GM12878 (cell line): ENCODE measurements at regions of chr11 and their contacts with region 1.

Region 1: GRCh38 chr11:64703048-64703447 is 19.9 kb downstream of the NRXN2 start:
- DNase-seq: no peak
- ATAC-seq: no peak
- H3K4me3 ChIP-seq: no peak overlapping the region
- H3K27ac ChIP-seq: no peak overlapping the region
- H3K4me1 ChIP-seq: no peaks in the 10 kb centered on the region
- H3K27me3 ChIP-seq: peaks cover 0 to 2% of the 10 kb centered on the region in 2 experiments; a peak in 2 of 4 replicates
- CTCF ChIP-seq: no peak
- EP300 ChIP-seq: no peak
- POLR2A ChIP-seq: no peak
- RAD21 ChIP-seq: no peak

Region 2: DNA sequence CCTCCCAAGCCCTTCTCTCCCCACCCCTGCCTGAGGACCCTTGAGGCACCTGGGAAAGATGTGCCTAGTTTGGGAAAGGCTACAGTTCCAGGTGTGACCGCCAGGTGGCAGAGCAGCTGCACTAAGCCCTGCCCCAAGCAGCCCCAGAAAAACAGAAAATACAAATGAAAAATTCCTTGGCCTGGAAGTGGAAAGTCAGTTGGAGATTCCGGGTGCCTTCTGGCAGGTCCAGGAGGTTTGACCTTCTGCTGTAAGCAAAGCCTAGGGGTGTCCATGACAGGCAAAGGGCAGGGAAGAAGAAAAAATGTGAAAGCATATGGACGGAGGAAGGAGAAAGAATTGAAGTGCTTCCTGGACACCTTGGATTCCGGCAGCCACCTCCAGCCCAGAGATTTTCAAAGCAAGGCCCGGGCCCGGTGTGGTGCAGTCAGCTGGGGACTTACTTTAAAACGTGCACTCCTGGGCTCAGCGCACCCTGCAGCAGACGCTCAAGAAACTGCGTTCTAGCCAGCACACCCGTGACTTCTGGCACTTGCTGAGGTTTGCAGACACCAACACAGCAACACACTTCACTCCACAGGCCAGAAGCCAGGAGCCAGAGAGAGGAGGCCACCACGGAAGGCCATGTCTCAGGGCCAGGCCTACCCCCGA is 149.4 kb before region 1 on chr11:
- CTCF ChIA-PET with region 1: no interaction called
- POLR2A ChIA-PET with region 1: no interaction called
- RAD21 ChIA-PET with region 1: no interaction called
- SMC1A ChIA-PET with region 1: no interaction called
- in situ Hi-C with region 1: no loop called
- intact Hi-C with region 1: no loop called
- DNase-seq: no peak
- ATAC-seq: peak; percentile 67
- H3K4me3 ChIP-seq: no peak overlapping the region
- H3K27ac ChIP-seq: no peak overlapping the region
- H3K4me1 ChIP-seq: no peaks in the 10 kb centered on the region
- H3K27me3 ChIP-seq: peaks cover 0 to 2% of the 10 kb centered on the region in 2 experiments; a peak in 1 of 4 replicates
- CTCF ChIP-seq: peak; percentile 86 to 97 (median 95)
- EP300 ChIP-seq: no peak
- POLR2A ChIP-seq: no peak
- RAD21 ChIP-seq: peak; percentile 67

Region 3: DNA sequence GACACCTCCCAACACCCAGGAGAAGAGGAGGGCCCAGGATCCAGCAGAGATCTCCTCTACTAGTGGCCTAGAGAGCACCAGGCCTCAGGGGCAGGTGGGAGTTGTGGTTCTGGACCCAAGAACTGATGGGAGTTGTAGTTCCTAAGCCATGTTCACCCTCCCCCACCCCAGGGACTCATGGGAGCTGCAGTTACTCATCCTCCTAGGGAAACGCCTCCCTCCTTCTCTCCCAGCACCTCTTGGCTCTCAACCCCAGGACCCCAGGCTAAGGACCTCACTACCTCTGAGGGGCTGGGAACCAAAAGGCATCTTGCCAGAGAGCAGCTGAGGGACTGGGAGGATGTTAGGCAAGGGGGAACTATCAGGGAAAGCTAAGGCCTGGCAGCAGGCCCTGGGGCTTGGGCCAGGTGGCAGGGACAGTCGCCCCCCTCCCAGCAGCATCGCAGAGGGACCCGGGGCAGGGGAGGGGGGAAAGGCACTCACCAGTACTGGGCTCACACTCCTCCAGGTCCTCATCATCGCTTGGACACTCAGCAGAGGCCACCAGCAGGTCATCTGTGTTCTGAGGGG is 83.2 kb before region 1 on chr11:
- CTCF ChIA-PET with region 1: no interaction called
- POLR2A ChIA-PET with region 1: no interaction called
- RAD21 ChIA-PET with region 1: no interaction called
- SMC1A ChIA-PET with region 1: no interaction called
- in situ Hi-C with region 1: no loop called
- intact Hi-C with region 1: no loop called
- DNase-seq: no peak
- ATAC-seq: peak; percentile 43
- H3K4me3 ChIP-seq: no peak overlapping the region
- H3K27ac ChIP-seq: no peak overlapping the region
- H3K4me1 ChIP-seq: peaks cover 1% of the 10 kb centered on the region
- H3K27me3 ChIP-seq: no peaks in the 10 kb centered on the region
- CTCF ChIP-seq: no peak
- EP300 ChIP-seq: no peak
- POLR2A ChIP-seq: no peak
- RAD21 ChIP-seq: no peak

Region 4: GRCh38 chr11:64734811-64735724 is 32.0 kb after region 1 on chr11:
- CTCF ChIA-PET with region 1: interaction called, 10 read pairs
- POLR2A ChIA-PET with region 1: no interaction called
- RAD21 ChIA-PET with region 1: no interaction called
- SMC1A ChIA-PET with region 1: no interaction called
- in situ Hi-C with region 1: no loop called
- intact Hi-C with region 1: no loop called
- DNase-seq: no peak
- ATAC-seq: no peak
- H3K4me3 ChIP-seq: no peak overlapping the region
- H3K27ac ChIP-seq: no peak overlapping the region
- H3K4me1 ChIP-seq: no peaks in the 10 kb centered on the region
- H3K27me3 ChIP-seq: no peaks in the 10 kb centered on the region
- CTCF ChIP-seq: no peak
- EP300 ChIP-seq: no peak
- POLR2A ChIP-seq: no peak
- RAD21 ChIP-seq: no peak